IMR-90 (cell line): ENCODE measurements at regions of chr16 and their contacts with region 1.

Region 1: DNA sequence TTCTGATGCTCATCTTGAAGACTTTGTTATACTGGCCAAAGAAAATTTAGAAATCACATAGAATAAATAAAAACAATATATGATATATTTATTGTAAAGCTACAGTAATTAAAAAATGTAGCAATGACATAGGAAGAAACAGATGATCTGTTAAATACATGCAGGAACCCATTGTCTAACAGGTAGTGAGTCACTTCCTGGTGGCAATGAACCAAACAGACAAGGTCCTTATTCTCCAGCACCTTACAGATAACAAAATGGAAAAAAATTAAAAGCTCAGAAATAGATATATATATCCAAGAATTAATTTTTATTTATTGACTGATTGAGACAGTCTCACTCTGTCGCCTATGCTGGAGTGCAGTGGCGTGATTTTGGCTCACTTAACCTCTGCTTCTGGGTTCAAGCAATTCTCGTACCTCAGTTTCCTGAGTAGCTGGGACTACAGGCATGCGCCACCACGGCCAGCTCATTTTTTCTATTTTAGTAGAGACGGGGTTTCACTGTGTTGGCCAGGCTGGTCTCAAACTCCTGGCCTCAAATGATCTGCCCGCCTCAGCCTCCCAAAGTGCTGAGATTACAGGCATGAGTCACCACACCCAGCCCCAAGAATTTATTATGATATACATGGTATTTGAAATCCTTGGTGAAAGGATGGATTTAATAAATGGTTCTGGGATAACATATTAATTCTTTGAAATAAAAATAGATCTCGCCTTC is 7.5 kb downstream of the NETO2 start:
- DNase-seq: peak; percentile 45
- ATAC-seq: no peak
- H3K4me3 ChIP-seq: no peak overlapping the region
- H3K27ac ChIP-seq: no peak overlapping the region
- H3K4me1 ChIP-seq: no peaks in the 10 kb centered on the region
- H3K27me3 ChIP-seq: no peaks in the 10 kb centered on the region
- CTCF ChIP-seq: no peak
- POLR2A ChIP-seq: no peak
- RAD21 ChIP-seq: no peak

Region 2: DNA sequence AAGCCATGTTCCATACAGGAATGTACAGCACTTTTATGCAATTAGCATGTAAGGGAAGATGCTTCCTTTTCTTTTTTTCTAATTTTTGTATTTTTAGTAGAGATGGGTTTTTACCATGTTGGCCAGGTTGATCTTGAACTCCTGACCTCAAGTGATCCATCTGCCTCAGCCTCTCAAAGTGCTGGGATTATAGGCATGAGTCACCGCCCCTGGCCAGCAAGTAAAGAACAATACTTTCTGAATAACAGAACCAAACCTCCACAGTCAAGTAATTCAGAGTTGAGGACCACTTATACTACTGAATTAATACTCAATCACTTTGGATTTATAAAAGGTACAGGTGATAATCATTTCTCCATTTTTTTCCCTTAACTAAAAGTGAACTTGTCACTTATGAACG is 318.3 kb before region 1 on chr16:
- CTCF ChIA-PET with region 1: no interaction called
- POLR2A ChIA-PET with region 1: no interaction called
- dilution Hi-C with region 1: no loop called
- in situ Hi-C with region 1: no loop called
- intact Hi-C with region 1: no loop called
- DNase-seq: peak; percentile 52
- ATAC-seq: no peak
- H3K4me3 ChIP-seq: no peak overlapping the region
- H3K27ac ChIP-seq: no peak overlapping the region
- H3K4me1 ChIP-seq: peaks cover 10% of the 10 kb centered on the region
- H3K27me3 ChIP-seq: no peaks in the 10 kb centered on the region
- CTCF ChIP-seq: no peak
- POLR2A ChIP-seq: no peak
- RAD21 ChIP-seq: no peak

Region 3: GRCh38 chr16:48542020-48542473 is 1405.8 kb after region 1 on chr16:
- CTCF ChIA-PET with region 1: no interaction called
- POLR2A ChIA-PET with region 1: no interaction called
- dilution Hi-C with region 1: no loop called
- in situ Hi-C with region 1: no loop called
- intact Hi-C with region 1: loop called (anchors 10 kb)
- DNase-seq: peak; percentile 54
- ATAC-seq: peak; percentile 79
- H3K4me3 ChIP-seq: no peak overlapping the region
- H3K27ac ChIP-seq: no peak overlapping the region
- H3K4me1 ChIP-seq: peaks cover 5% of the 10 kb centered on the region; the same call in 1 of the 2 replicates
- H3K27me3 ChIP-seq: no peaks in the 10 kb centered on the region
- CTCF ChIP-seq: peak; percentile 68
- POLR2A ChIP-seq: 0 out of 2 replicates have a peak, but pooled peaks have one; percentile 35
- RAD21 ChIP-seq: peak; percentile 89